Activated CD4-positive, alpha-beta T cell treated with anti-CD3 and anti-CD28 coated beads for 36 hours (primary cell): ENCODE measurements at regions of chr11 and their contacts with region 1.

Region 1: DNA sequence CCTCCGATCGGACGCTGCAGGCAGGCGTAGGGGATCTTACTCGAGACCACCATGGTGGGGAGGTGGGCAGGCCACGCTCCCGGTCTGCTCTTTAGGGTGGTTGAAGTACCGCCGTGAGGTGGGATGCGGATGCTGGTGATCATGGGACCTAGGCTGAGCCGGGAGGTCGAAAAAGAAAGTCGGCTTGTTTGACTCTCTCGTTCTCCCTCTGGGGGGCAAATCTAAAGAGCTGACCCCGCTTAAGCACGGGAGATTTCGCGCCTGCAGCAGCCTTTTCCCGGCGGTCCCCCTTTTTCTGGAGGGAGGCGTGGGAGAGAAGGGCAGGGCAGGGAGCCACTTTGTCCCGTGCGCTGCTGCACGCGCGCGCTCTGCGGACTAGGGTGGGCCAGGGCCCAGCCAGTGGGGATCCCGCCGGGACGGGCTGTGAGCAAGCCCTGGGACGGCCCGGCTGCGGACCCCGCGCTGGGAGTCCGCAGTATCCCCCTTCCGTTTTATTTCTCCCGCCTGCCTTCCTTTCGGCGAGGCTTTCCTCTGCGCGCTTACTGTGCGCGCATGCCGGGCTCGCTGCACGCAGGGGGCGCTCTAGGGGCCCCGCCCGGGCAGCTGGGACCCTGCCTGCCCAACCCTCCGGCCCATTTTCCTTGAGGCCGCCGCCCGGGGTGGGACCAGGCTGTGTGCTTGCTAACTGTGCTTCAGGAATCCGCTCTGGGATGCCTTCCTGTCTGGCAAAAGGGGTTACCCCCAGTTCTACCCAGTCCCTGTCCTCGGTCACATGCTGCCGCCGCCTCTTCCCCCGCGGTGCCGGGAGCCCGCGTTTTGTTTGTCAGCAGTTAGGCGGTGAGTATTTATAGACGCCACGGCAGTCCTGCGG is 81.0 kb downstream of the PRR5L start:
- DNase-seq: peak; percentile 79
- ATAC-seq: peak; percentile 74
- H3K4me3 Mint-ChIP-seq: peak overlapping the region; percentile 92
- H3K27ac Mint-ChIP-seq: peak overlapping the region; percentile 84
- H3K4me1 Mint-ChIP-seq: peaks cover 33% of the 10 kb centered on the region
- H3K27me3 Mint-ChIP-seq: peaks cover 38% of the 10 kb centered on the region

Region 2: GRCh38 chr11:36354221-36355003 is 22.7 kb before region 1 on chr11:
- CTCF ChIA-PET with region 1: interaction called, 7 read pairs
- POLR2A ChIA-PET with region 1: interaction called, 4 read pairs
- intact Hi-C with region 1: loop called in 1 of 2 experiments (anchors 1 kb)
- DNase-seq: no peak
- ATAC-seq: peak; percentile 54
- H3K4me3 Mint-ChIP-seq: peak overlapping the region; percentile 28
- H3K27ac Mint-ChIP-seq: peak overlapping the region; percentile 77
- H3K4me1 Mint-ChIP-seq: peaks cover 73% of the 10 kb centered on the region
- H3K27me3 Mint-ChIP-seq: peaks cover 6% of the 10 kb centered on the region

Region 3: DNA sequence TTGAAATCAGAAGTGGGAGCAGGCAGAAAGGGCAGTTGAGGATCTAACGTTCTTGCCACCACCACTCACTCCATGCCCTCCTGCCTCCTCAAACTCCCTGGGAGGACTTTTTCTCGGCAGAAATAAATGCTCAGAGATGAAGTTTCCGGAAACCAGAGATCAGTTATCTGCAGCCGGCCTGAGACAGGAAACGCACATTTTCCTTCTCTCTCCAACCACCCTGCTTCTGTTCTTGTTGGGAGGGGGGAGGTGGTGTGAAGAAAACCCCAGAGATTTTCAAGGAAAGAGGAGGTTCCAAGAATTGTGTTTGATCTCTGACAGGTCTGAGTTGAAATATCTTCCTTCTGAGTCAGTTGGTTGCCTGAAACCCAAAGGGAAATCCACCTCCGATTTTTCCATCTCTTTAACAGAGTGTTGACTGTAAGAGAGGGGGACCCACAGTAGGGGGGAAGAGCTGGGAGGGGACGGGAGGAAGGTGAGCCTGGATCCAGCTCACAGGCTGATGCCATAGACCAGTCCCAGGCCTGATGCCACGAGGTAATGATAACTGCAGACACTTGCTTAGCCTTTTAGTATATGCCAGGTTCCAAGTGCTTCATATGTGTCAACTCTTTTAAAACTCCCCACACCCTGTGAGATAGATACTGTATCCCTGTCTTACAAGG is 32.2 kb after region 1 on chr11:
- CTCF ChIA-PET with region 1: interaction called, 4 read pairs
- POLR2A ChIA-PET with region 1: no interaction called
- intact Hi-C with region 1: loop called in 1 of 2 experiments (anchors 1 kb)
- DNase-seq: peak; percentile 61
- ATAC-seq: peak; percentile 83
- H3K4me3 Mint-ChIP-seq: peak overlapping the region; percentile 17
- H3K27ac Mint-ChIP-seq: peak overlapping the region; percentile 91
- H3K4me1 Mint-ChIP-seq: peaks cover 59% of the 10 kb centered on the region
- H3K27me3 Mint-ChIP-seq: no peaks in the 10 kb centered on the region

Region 4: GRCh38 chr11:36441610-36442208 is 64.6 kb after region 1 on chr11:
- CTCF ChIA-PET with region 1: no interaction called
- POLR2A ChIA-PET with region 1: no interaction called
- intact Hi-C with region 1: loop called in 1 of 2 experiments (anchors 5 kb)
- DNase-seq: peak; percentile 47
- ATAC-seq: peak; percentile 96
- H3K4me3 Mint-ChIP-seq: no peak overlapping the region
- H3K27ac Mint-ChIP-seq: no peak overlapping the region
- H3K4me1 Mint-ChIP-seq: peaks cover 15% of the 10 kb centered on the region
- H3K27me3 Mint-ChIP-seq: no peaks in the 10 kb centered on the region

Region 5: DNA sequence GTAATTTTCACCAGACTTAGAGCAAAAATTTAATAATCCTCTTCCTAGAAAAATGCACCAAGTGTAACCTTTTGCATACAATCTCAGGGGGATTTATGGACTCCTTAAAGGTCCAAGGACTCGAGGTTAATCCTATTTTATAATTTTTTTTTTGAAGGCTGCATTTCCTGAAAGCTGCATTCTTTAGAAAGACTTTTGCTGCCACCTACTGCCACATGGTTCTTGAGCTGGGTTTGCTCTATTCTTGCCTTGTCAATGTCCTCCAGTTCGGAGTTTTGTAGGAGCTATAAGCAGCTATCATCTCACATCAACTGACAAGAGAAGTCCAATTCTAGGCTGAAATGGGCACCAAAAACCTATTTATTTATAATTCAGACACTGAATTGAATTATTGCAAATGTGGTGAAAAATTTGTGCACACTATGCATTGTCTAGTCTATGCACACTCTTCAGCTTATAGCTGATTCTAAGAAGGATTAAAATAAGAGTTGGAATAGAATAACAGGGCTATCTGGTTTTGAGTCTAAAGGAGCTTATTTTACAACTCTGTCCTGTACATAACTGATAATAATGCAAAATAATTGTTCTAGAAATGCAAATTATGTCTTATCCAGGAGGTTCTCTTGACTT is 101.7 kb after region 1 on chr11:
- CTCF ChIA-PET with region 1: interaction called, 10 read pairs
- POLR2A ChIA-PET with region 1: no interaction called
- intact Hi-C with region 1: loop called in 1 of 2 experiments (anchors 5 kb)
- DNase-seq: peak; percentile 54
- ATAC-seq: peak; percentile 44
- H3K4me3 Mint-ChIP-seq: no peak overlapping the region
- H3K27ac Mint-ChIP-seq: no peak overlapping the region
- H3K4me1 Mint-ChIP-seq: peaks cover 6% of the 10 kb centered on the region
- H3K27me3 Mint-ChIP-seq: no peaks in the 10 kb centered on the region

Region 6: GRCh38 chr11:36564376-36565030 is 187.4 kb after region 1 on chr11:
- CTCF ChIA-PET with region 1: no interaction called
- POLR2A ChIA-PET with region 1: no interaction called
- intact Hi-C with region 1: no loop called
- DNase-seq: peak; percentile 69
- ATAC-seq: peak; percentile 66
- H3K4me3 Mint-ChIP-seq: peak overlapping the region; percentile 2
- H3K27ac Mint-ChIP-seq: no peak overlapping the region
- H3K4me1 Mint-ChIP-seq: no peaks in the 10 kb centered on the region
- H3K27me3 Mint-ChIP-seq: peaks cover 32% of the 10 kb centered on the region